Heart left ventricle (tissue), 16 donors: ENCODE measurements at regions of chr5 and their contacts with region 1.

Region 1: GRCh38 chr5:134845852-134846640 is at the start of gene C5orf24:
- DNase-seq: peak; percentile 94 to 97 (median 97)
- ATAC-seq: peak; percentile 98 to 99 (median 98)
- H3K4me3 ChIP-seq: peak within 1 kb of the TSS; percentile 68 to 99 (median 90)
- H3K27ac ChIP-seq: peak within 1 kb of the TSS; percentile 94 to 99 (median 97)
- H3K4me1 ChIP-seq: peaks cover 6 to 41% (median 27%) of the 10 kb centered on the region in 12 donors
- H3K27me3 ChIP-seq: no peaks in the 10 kb centered on the region
- CTCF ChIP-seq: peak in 1 of 12 donors; percentile 4
- POLR2A ChIP-seq: peak; percentile 84 to 98
- total RNA-seq, gene C5orf24: 23.4 to 32.9 (median 27.0) TPM

Region 2: DNA sequence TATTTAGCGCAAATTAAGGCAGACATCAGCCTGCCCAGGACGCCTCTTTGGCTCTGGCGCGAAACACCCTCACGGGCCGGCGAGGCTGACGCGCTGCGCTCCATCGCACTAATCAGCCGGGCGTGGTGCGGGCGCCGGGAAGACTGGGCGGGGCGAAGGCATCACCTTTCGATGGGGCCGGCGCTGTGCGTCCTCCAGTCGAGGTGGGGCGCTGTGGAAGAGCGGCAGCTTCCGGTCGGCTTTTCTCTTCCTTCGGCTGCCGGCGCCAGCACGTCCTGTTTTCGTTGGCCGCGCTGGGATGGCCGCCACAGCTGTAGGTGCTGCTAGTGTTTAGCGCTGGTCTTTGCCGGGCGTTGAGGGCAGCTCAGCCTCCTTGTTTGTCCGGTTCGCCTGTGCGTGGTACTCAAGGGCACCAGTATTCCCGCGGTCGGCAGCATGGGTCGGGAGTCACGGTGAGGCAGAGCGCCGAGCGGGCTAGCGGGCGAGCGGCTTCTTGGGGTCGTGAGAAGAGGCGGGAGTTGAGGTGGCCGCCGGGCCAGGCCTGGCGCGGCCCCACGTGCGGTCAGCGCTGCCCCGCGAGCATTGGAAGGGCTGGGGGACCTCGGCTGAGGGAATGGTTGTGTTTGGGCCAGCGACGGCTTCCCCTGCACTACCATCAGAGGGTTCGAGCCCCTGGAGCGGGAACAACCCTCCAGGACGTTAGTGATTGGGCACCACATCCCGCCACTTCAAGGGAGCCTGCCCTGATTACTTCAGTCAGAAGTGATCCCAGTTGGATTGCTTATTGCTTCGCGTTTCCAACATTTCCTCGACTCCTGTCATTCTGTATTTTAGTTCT is 87.3 kb before region 1 on chr5 and contains the start of gene DDX46:
- intact Hi-C with region 1: loop called in 1 of 10 experiments (anchors 10 kb)
- DNase-seq: peak; percentile 91 to 96 (median 94)
- ATAC-seq: peak; percentile 95 to 99 (median 99)
- H3K4me3 ChIP-seq: peak within 1 kb of the TSS; percentile 62 to 98 (median 80)
- H3K27ac ChIP-seq: peak within 1 kb of the TSS in 11 of 12 donors; percentile 51 to 86 (median 67)
- H3K4me1 ChIP-seq: peaks cover 0 to 28% (median 19%) of the 10 kb centered on the region in 12 donors
- H3K27me3 ChIP-seq: no peaks in the 10 kb centered on the region
- CTCF ChIP-seq: peak; percentile 55 to 95 (median 78)
- POLR2A ChIP-seq: peak in 1 of 2 donors; percentile 74
- total RNA-seq, gene DDX46: 14.3 to 37.0 (median 28.8) TPM

Region 3: DNA sequence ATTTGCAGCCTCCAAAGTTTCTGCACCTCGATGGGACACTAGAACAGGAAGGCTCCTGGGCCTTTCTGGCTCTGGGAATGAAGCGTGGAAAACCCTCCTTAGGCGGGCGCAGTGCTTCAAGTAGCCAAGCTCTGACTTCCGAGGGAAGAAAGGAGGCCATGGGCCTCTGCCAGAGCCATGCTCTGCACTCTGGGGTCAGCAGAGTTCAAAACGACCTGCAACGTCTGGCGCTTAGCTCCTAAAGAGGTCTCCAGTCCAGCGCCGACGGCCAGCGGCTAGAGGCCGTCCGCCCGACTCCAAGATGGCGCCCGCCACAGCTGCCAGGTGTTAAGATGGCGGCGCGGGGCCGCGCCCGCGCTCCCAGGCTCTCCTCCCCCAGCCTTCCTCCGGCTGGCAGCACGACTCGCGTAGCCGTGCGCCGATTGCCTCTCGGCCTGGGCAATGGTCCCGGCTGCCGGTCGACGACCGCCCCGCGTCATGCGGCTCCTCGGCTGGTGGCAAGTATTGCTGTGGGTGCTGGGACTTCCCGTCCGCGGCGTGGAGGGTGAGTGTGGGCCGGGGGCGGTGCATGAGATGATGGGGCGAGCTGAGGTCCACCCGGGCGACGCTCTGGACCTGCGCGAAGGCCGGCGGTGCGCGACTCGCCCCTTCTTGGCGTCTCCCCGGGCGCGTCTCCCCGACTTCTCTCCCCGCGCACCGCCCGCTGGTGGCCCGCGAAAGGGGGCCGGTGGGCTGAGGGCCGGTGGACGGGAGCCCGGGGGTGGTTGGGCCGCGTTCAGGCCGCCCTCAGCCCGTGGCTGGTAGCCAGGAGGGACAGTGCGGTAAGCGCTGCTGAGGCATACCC is 28.2 kb after region 1 on chr5 and contains the start of gene TXNDC15:
- intact Hi-C with region 1: loop called in 2 of 10 experiments (anchors 1 to 2 kb)
- DNase-seq: peak; percentile 90 to 94 (median 93)
- ATAC-seq: peak; percentile 90 to 97 (median 96)
- H3K4me3 ChIP-seq: peak within 1 kb of the TSS; percentile 74 to 97 (median 91)
- H3K27ac ChIP-seq: peak within 1 kb of the TSS; percentile 66 to 99 (median 96)
- H3K4me1 ChIP-seq: peaks cover 0 to 38% (median 18%) of the 10 kb centered on the region in 12 donors
- H3K27me3 ChIP-seq: no peaks in the 10 kb centered on the region
- CTCF ChIP-seq: no peak
- POLR2A ChIP-seq: peak in 1 of 2 donors; percentile 56
- total RNA-seq, gene TXNDC15: 38.4 to 59.7 (median 55.6) TPM

Region 4: DNA sequence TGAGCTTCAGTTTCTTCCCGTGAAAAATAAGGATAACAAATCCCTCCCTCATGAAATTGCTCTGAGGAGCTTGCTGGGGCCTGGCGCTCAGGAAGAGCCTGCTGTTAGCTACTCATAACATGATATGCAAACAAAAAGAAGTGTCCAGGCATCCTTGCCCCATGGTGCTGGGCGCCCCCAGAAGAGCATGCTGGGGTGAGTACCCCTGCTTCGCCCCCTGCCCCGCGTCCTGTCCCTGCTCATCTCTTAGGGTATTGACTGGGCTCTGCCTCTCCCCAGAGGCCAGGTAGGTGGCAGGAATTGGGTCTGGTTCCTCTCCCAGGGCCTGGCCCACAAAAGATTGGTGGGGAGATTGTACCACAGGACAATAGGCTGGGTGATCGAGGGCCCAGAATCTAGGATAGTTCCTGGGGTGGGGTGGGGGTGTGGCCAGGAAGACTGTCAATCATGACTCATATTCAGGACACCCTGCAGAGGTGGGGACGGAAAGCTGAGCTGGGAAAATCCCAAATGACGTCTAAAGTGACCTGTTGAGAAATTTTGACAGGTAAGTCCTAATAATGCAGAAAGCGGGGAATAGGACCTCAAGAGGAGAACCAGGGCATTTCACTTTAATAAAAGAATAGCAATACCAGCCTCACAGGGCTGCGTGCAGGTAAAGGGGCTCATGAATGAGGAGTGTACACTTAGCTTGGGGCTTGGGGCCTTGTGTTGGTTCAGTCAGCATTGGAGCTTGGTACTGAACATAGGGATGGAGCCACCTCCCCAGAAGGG is 179.1 kb after region 1 on chr5:
- intact Hi-C with region 1: no loop called
- DNase-seq: peak in 2 of 5 donors; percentile 19 to 38
- ATAC-seq: no peak
- H3K4me3 ChIP-seq: no peak overlapping the region
- H3K27ac ChIP-seq: no peak overlapping the region
- H3K4me1 ChIP-seq: peaks cover 0 to 19% (median 0%) of the 10 kb centered on the region in 12 donors
- H3K27me3 ChIP-seq: peaks cover 29 to 62% (median 47%) of the 10 kb centered on the region in 9 donors
- CTCF ChIP-seq: no peak
- POLR2A ChIP-seq: no peak

Region 5: GRCh38 chr5:135116160-135116561 is 270.1 kb after region 1 on chr5:
- intact Hi-C with region 1: no loop called
- DNase-seq: peak in 4 of 5 donors; percentile 24 to 63 (median 34)
- ATAC-seq: peak; percentile 51 to 74 (median 56)
- H3K4me3 ChIP-seq: no peak overlapping the region
- H3K27ac ChIP-seq: peak overlapping the region in 1 of 12 donors; percentile 75
- H3K4me1 ChIP-seq: peaks cover 0 to 12% (median 0%) of the 10 kb centered on the region in 12 donors
- H3K27me3 ChIP-seq: peaks cover 0 to 4% (median 0%) of the 10 kb centered on the region in 9 donors
- CTCF ChIP-seq: no peak
- POLR2A ChIP-seq: no peak